ENCODE measurements at regions of chr3 and their contacts with region 1.

Region 1: GRCh38 chr3:50192689-50193141 is 1.3 kb downstream of the GNAT1 start:
- DNase-seq: peak; percentile 73 to 85 (median 78)
- ATAC-seq: peak; percentile 57
- H3K4me3 ChIP-seq: no peak overlapping the region
- H3K27ac ChIP-seq: no peak overlapping the region
- H3K4me1 ChIP-seq: peaks cover 34% of the 10 kb centered on the region
- H3K27me3 ChIP-seq: peaks cover 0 to 16% of the 10 kb centered on the region in 2 donors
- CTCF ChIP-seq: peak; percentile 81 to 96 (median 92)
- POLR2A ChIP-seq: no peak

Region 2: GRCh38 chr3:50121416-50122032 is 71.2 kb before region 1 on chr3:
- intact Hi-C with region 1: loop called (anchors 5 kb)
- DNase-seq: peak; percentile 75 to 82 (median 79)
- ATAC-seq: peak; percentile 86
- H3K4me3 ChIP-seq: no peak overlapping the region
- H3K27ac ChIP-seq: peak overlapping the region in 1 of 4 donors; percentile 8
- H3K4me1 ChIP-seq: peaks cover 8% of the 10 kb centered on the region
- H3K27me3 ChIP-seq: no peaks in the 10 kb centered on the region
- CTCF ChIP-seq: peak; percentile 63 to 89 (median 78)
- POLR2A ChIP-seq: peak in 1 of 3 donors; percentile 7

Region 3: GRCh38 chr3:50224639-50225038 is 31.9 kb after region 1 on chr3:
- intact Hi-C with region 1: loop called (anchors 2 kb)
- DNase-seq: no peak
- ATAC-seq: no peak
- H3K4me3 ChIP-seq: no peak overlapping the region
- H3K27ac ChIP-seq: no peak overlapping the region
- H3K4me1 ChIP-seq: peaks cover 43% of the 10 kb centered on the region
- H3K27me3 ChIP-seq: no peaks in the 10 kb centered on the region
- CTCF ChIP-seq: no peak
- POLR2A ChIP-seq: no peak

Region 4: GRCh38 chr3:50272911-50273693 is 80.4 kb after region 1 on chr3:
- intact Hi-C with region 1: loop called (anchors 10 kb)
- DNase-seq: peak; percentile 86 to 91 (median 90)
- ATAC-seq: peak; percentile 70
- H3K4me3 ChIP-seq: no peak overlapping the region
- H3K27ac ChIP-seq: peak overlapping the region in 3 of 4 donors; percentile 93 to 97 (median 94)
- H3K4me1 ChIP-seq: peaks cover 62% of the 10 kb centered on the region
- H3K27me3 ChIP-seq: no peaks in the 10 kb centered on the region
- CTCF ChIP-seq: peak; percentile 94 to 99 (median 99)
- POLR2A ChIP-seq: peak in 2 of 3 donors; percentile 18 to 24

Measured in body of pancreas (tissue), 4 donors.